ENCODE measurements at regions of chr17 and their contacts with region 1.

Region 1: GRCh38 chr17:50478391-50479381 is at the start of gene RSAD1:
- DNase-seq: peak; percentile 83
- H3K4me3 ChIP-seq: peak within 1 kb of the TSS; percentile 82
- H3K27ac ChIP-seq: peak within 1 kb of the TSS; percentile 89
- H3K4me1 ChIP-seq: peaks cover 7% of the 10 kb centered on the region
- H3K27me3 ChIP-seq: no peaks in the 10 kb centered on the region
- CTCF ChIP-seq: peak; percentile 89
- total RNA-seq, gene RSAD1: 22.2 to 29.3 TPM

Region 2: GRCh38 chr17:50129728-50130558 is 348.7 kb before region 1 on chr17 and contains the start of gene SAMD14:
- intact Hi-C with region 1: no loop called
- DNase-seq: no peak
- H3K4me3 ChIP-seq: peak within 1 kb of the TSS; percentile 33
- H3K27ac ChIP-seq: no peak within 1 kb of the TSS
- H3K4me1 ChIP-seq: peaks cover 10% of the 10 kb centered on the region
- H3K27me3 ChIP-seq: peaks cover 16% of the 10 kb centered on the region
- CTCF ChIP-seq: no peak
- total RNA-seq, gene SAMD14: 0.77 to 2.3 TPM

Region 3: GRCh38 chr17:50361561-50362480 is 116.9 kb before region 1 on chr17:
- intact Hi-C with region 1: loop called (anchors 2 kb)
- DNase-seq: peak; percentile 67
- H3K4me3 ChIP-seq: no peak overlapping the region
- H3K27ac ChIP-seq: no peak overlapping the region
- H3K4me1 ChIP-seq: peaks cover 5% of the 10 kb centered on the region
- H3K27me3 ChIP-seq: no peaks in the 10 kb centered on the region
- CTCF ChIP-seq: peak; percentile 85

Region 4: DNA sequence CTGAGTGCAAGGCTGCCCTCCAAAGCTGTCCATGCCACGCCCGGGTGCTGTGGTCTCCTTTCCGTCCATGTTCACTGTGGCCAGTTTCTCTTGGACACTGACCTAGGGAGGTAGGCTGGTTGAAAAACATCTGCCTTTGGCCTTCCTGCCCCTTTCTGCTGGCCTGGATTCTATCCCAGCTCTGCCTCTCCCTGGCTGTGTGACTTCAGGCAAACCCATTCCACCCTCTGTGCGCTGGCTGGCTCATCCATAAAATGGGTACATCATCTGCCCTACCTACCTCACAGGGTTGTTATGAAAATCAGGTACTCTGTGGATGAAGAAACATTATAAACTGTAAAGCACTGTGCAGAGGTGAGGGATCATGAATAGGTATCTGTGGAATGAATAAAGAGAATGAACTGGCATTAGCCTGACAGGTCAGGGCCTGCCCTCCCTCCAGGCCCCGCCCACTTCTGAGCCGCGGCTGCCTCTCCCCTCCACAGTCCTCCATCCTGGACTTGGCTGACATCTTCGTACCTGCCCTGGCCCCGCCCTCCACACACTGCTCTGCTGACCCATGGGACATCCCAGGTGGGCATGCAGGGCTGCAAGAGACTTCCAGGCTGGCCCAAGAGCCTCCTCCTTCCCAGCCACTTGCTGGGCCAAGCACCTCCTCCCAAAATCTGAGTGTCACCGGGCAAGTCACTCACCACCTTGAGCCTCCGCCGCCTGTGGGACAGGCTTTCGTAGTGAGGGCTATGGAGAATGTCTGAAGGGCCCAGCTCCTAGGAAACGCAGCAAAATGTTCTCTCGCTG is 61.3 kb after region 1 on chr17:
- intact Hi-C with region 1: loop called (anchors 5 kb)
- DNase-seq: peak; percentile 75
- H3K4me3 ChIP-seq: no peak overlapping the region
- H3K27ac ChIP-seq: no peak overlapping the region
- H3K4me1 ChIP-seq: peaks cover 23% of the 10 kb centered on the region
- H3K27me3 ChIP-seq: no peaks in the 10 kb centered on the region
- CTCF ChIP-seq: no peak

Measured in colonic mucosa (tissue), 4 donors.